Activated T-helper 1 cell treated with anti-CD3 and anti-CD28 coated beads, Interleukin-12 subunit alpha, Interleukin-12 subunit beta, Interleukin-2, Interleukin-4 antibody, amounts not matched to agents 30 ng/mL and 10 ng/mL and 1 ng/mL, durations not matched to agents 14 hours and 24 hours and 36 hours (primary cell): ENCODE measurements at regions of chr20 and their contacts with region 1.

Region 1: DNA sequence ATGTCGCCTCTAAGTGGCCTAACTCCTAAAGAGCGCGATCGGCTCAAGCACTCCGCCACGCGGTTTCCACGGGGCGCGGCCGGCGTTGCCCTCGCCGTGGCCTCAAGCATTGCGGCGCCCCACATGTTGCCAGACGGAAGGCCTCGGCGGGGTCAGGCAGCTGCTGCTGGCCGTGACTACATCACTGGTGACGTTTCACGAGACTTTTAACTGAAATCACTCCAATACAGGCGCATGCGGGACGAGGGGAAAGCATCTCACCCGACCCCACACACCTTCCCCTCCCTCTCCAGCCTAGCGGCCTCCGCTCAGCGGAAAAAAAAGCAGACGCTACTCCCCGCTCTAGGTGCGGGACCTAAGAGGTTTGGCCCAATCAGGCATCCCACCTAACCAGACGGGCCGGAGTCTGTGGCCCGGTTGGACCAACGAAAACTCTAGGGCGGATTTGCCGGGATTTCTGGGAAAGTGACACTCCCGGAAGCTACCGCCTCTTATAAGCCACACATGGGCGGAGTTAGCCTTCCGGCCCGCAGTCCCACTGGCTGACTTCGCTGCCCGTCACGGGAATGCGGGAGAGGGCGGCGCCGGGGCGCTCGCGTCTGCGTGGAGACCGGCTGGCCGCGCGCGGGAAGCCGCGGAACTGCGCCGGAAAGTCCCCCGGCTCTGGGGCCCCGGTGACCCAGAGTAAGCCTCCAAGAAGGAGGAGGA is at the start of gene NXT1:
- DNase-seq: peak; percentile 97
- H3K4me3 Mint-ChIP-seq: peak within 1 kb of the TSS; percentile 94
- H3K27ac Mint-ChIP-seq: peak within 1 kb of the TSS; percentile 100
- H3K4me1 Mint-ChIP-seq: peaks cover 33% of the 10 kb centered on the region
- H3K27me3 Mint-ChIP-seq: no peaks in the 10 kb centered on the region
- total RNA-seq, gene NXT1: 58.9 and 62.6 TPM in 2 replicates

Region 2: DNA sequence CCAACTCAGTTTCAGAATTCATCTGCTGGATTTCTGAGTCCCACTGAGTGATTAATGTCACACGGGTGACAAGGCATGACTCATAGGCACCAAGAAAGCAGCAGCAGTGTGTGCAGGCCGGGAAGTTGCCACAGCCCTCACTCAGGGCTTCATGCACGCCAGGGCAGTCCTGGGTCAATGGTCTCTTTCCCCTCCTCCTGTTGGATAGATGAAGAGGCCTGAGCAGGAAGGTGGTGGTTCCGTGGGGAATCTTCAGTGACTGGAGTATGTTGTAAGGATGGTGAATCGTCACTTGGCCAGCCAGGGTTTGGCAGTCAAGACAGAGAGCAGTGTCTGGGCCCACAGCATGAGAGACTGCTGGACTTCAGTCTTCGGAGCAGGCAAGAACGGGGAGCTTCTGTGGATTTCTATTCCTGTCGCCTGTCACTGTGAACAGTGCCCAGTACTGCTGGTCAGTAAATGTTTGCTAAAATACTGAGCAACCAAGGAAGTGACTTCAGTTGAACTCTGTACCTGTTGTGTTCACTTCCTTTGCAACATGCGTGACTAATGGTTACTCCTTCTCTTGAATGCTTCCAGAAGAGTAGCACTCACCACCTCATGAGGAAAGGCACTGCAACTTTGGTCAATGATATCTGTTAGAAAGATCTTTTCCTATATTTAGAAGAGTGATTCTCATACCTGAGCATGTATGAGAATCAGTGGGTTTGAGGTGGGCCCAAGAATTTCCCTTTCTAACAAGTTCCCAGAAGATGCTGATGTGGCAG is 202.2 kb before region 1 on chr20:
- intact Hi-C with region 1: loop called (anchors 1 kb)
- DNase-seq: peak; percentile 35
- H3K4me3 Mint-ChIP-seq: peak overlapping the region; percentile 35
- H3K27ac Mint-ChIP-seq: peak overlapping the region; percentile 90
- H3K4me1 Mint-ChIP-seq: peaks cover 80% of the 10 kb centered on the region
- H3K27me3 Mint-ChIP-seq: peaks cover 12% of the 10 kb centered on the region

Region 3: GRCh38 chr20:23361598-23362384 is 11.4 kb after region 1 on chr20 and contains the start of gene GZF1:
- intact Hi-C with region 1: loop called (anchors 1 kb)
- DNase-seq: peak; percentile 98
- H3K4me3 Mint-ChIP-seq: peak within 1 kb of the TSS; percentile 96
- H3K27ac Mint-ChIP-seq: peak within 1 kb of the TSS; percentile 92
- H3K4me1 Mint-ChIP-seq: peaks cover 56% of the 10 kb centered on the region
- H3K27me3 Mint-ChIP-seq: peaks cover 1% of the 10 kb centered on the region
- total RNA-seq, gene GZF1: 10.6 and 12.6 TPM in 2 replicates

Region 4: GRCh38 chr20:23399568-23400241 is 49.4 kb after region 1 on chr20:
- intact Hi-C with region 1: loop called (anchors 1 kb)
- DNase-seq: no peak
- H3K4me3 Mint-ChIP-seq: peak overlapping the region; percentile 65
- H3K27ac Mint-ChIP-seq: peak overlapping the region; percentile 56
- H3K4me1 Mint-ChIP-seq: peaks cover 62% of the 10 kb centered on the region
- H3K27me3 Mint-ChIP-seq: no peaks in the 10 kb centered on the region

Region 5: DNA sequence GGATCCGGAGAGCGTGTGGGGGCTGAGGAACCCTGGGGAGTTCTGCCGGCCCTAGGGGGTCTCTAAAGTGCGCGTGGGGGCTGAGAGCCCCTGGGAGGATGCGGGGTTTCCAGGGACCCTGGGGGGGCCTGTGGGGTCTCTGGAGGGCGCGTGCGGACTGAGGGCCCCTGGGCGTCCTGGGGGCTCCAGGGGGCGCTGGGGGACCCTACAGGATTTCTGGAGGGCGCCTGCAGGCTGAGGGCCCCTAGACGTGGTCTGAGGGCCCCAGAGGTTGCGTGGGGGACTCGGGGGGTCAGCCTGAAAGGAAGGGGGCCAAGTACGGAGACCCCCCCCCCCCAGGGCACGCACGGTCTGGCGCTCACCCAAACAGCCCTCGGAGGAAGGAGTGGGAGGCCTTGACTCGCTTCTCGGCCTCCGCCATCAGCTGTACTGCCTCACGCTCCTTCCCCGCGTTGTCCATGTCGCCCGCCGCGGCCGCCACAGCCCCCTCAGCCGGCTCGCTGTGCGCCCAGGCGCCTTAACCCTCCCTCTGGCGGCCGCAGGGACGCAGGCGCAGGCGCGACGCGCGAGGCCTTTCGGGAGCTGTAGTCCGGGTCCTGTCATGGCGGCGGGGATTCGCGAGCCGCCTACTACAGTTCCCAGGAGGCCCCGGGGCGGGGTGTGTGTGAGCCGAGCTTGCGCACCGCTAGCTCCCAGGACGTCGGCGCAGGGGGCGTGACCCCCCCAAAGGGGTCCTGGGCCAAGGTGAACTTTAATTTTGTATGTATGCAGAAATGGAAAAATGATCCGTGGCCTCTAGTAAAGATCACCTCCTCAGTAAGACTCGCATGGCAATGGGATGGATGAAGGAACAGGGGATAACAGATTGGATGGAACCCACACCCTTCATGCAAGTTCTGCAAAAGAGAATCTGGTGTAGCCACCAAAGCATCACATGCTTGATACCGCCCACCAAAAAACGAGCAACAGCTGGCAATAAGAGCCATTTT is 70.9 kb after region 1 on chr20 and contains the start of gene NAPB:
- intact Hi-C with region 1: loop called (anchors 1 kb)
- DNase-seq: peak; percentile 92
- H3K4me3 Mint-ChIP-seq: peak within 1 kb of the TSS; percentile 97
- H3K27ac Mint-ChIP-seq: peak within 1 kb of the TSS; percentile 81
- H3K4me1 Mint-ChIP-seq: peaks cover 49% of the 10 kb centered on the region
- H3K27me3 Mint-ChIP-seq: no peaks in the 10 kb centered on the region
- total RNA-seq, gene NAPB: 14.0 and 15.5 TPM in 2 replicates

Region 6: DNA sequence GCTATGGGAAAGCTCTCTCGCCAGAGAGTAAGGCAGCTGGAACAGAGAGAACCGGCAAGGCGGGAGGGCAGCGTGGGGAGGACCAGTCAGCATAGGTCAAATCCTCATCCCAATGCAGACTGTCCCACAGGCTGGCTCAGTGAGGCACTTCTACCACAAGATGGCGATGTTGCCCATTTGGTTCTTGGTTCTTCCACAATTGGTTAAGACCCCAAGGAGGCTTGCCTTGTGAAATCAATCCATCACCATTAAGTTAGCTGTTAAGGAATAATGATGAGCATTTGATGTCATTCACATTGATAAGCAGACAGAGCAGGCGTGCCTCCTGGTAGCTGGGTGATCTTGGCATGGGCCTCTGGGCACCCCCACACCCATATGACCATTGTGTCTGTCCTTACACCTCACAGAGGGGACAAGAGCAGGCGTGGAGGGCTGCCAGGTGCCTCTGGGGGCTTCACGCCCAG is 91.5 kb after region 1 on chr20:
- intact Hi-C with region 1: loop called (anchors 1 kb)
- DNase-seq: peak; percentile 35
- H3K4me3 Mint-ChIP-seq: no peak overlapping the region
- H3K27ac Mint-ChIP-seq: no peak overlapping the region
- H3K4me1 Mint-ChIP-seq: no peaks in the 10 kb centered on the region
- H3K27me3 Mint-ChIP-seq: peaks cover 3% of the 10 kb centered on the region

Region 7: GRCh38 chr20:23606652-23607049 is 256.3 kb after region 1 on chr20:
- intact Hi-C with region 1: loop called (anchors 1 kb)
- DNase-seq: peak; percentile 44
- H3K4me3 Mint-ChIP-seq: no peak overlapping the region
- H3K27ac Mint-ChIP-seq: no peak overlapping the region
- H3K4me1 Mint-ChIP-seq: no peaks in the 10 kb centered on the region
- H3K27me3 Mint-ChIP-seq: peaks cover 2% of the 10 kb centered on the region